ENCODE measurements at regions of chr1 and their contacts with region 1.

Region 1: GRCh38 chr1:22131875-22132486 is 10.9 kb downstream of the WNT4 start:
- DNase-seq: peak; percentile 74
- ATAC-seq: peak; percentile 87
- H3K4me3 Mint-ChIP-seq: no peak overlapping the region
- H3K27ac Mint-ChIP-seq: no peak overlapping the region
- H3K4me1 Mint-ChIP-seq: no peaks in the 10 kb centered on the region
- H3K27me3 Mint-ChIP-seq: no peaks in the 10 kb centered on the region
- CTCF ChIP-seq: peak; percentile 87

Region 2: DNA sequence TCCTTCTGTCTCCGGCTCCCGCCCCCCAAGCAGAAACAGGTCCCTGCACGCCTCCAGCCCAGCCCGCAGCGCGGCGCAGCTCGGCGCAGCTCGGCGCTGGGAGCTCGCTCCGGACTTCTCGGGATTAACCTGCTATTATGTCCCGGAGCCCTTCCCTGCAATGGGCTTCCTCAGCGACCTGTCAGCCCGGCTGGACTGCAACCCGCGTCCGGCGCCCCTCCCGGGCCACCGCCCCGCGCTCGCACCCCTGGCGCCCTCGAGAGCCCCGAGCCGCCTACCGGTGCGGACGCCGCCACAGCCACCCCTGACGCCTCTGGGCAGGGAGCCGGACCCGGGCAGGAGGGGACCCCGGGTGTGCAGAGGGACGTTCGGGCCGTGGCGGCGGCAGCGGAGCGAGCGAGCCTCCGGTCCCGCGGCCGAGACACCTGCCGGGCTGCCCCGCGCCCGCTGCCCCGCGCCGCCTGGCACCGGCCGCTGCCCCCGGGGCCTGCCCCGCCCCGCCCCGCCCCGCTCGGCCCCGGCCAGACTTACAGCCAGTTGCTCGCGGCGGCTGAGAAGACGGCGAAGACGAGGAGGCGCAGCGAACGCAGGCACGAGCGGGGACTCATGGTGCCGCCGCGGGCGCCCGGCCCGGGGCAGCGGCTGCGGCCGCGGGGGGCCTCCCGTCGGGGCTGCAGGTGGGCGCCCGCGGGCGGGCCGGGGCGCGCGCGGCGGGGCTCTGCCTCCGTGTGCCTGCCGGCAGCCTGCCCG is 10.5 kb after region 1 on chr1:
- CTCF ChIA-PET with region 1: interaction called, 17 read pairs
- POLR2A ChIA-PET with region 1: no interaction called
- intact Hi-C with region 1: no loop called
- DNase-seq: peak; percentile 18
- ATAC-seq: peak; percentile 25
- H3K4me3 Mint-ChIP-seq: no peak overlapping the region
- H3K27ac Mint-ChIP-seq: no peak overlapping the region
- H3K4me1 Mint-ChIP-seq: peaks cover 6% of the 10 kb centered on the region
- H3K27me3 Mint-ChIP-seq: peaks cover 45% of the 10 kb centered on the region
- CTCF ChIP-seq: no peak

Region 3: DNA sequence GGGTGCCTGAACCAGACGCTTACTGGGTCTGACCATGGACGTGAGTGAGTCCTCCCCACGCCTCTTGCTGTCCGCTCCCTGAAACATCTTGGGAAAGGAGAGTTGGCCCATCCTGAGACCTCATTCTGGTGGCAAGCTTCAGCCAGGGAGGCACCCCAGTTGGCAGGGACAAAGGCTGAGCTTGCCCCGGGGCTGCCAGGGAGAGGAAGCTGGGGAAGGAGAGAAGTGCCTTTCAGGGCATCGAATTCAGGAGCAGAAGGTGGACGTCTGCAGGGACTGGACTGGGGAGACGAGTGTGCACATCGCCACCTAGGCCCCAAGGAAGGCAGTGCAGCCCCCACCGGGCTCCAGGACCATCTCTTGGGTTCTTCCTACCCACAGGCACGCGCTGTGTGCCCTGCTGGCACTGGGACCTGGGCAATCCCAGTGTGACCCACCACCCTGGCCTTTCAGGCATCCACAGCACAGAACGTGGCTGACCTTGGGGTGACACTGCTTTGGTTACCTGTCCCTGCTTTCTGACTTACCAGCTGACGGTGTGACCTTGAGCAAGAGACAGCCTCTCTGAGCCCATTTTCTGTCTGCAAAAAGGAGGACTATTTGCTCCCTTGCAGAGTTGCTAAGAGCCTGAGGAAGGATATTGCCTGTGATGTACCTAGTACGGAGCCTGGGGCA is 143.9 kb after region 1 on chr1:
- CTCF ChIA-PET with region 1: interaction called, 4 read pairs
- POLR2A ChIA-PET with region 1: no interaction called
- intact Hi-C with region 1: loop called (anchors 10 kb)
- DNase-seq: peak; percentile 67
- ATAC-seq: peak; percentile 85
- H3K4me3 Mint-ChIP-seq: no peak overlapping the region
- H3K27ac Mint-ChIP-seq: no peak overlapping the region
- H3K4me1 Mint-ChIP-seq: no peaks in the 10 kb centered on the region
- H3K27me3 Mint-ChIP-seq: peaks cover 9% of the 10 kb centered on the region
- CTCF ChIP-seq: peak; percentile 83

Region 4: GRCh38 chr1:22416555-22417454 is 284.8 kb after region 1 on chr1:
- CTCF ChIA-PET with region 1: interaction called, 27 read pairs
- POLR2A ChIA-PET with region 1: no interaction called
- intact Hi-C with region 1: loop called (anchors 10 kb)
- DNase-seq: peak; percentile 82
- ATAC-seq: peak; percentile 83
- H3K4me3 Mint-ChIP-seq: no peak overlapping the region
- H3K27ac Mint-ChIP-seq: no peak overlapping the region
- H3K4me1 Mint-ChIP-seq: peaks cover 5% of the 10 kb centered on the region
- H3K27me3 Mint-ChIP-seq: peaks cover 36% of the 10 kb centered on the region
- CTCF ChIP-seq: peak; percentile 90

Region 5: GRCh38 chr1:22641906-22642636 is 510.1 kb after region 1 on chr1:
- CTCF ChIA-PET with region 1: interaction called, 6 read pairs
- POLR2A ChIA-PET with region 1: no interaction called
- intact Hi-C with region 1: loop called (anchors 10 kb)
- DNase-seq: peak; percentile 73
- ATAC-seq: peak; percentile 83
- H3K4me3 Mint-ChIP-seq: no peak overlapping the region
- H3K27ac Mint-ChIP-seq: no peak overlapping the region
- H3K4me1 Mint-ChIP-seq: no peaks in the 10 kb centered on the region
- H3K27me3 Mint-ChIP-seq: peaks cover 9% of the 10 kb centered on the region
- CTCF ChIP-seq: peak; percentile 83